ENCODE measurements at regions of chr5 and their contacts with region 1.

Region 1: GRCh38 chr5:159133041-159133741 is 33.5 kb upstream of the EBF1 start:
- DNase-seq: peak; percentile 15
- H3K4me3 ChIP-seq: no peak overlapping the region
- H3K27ac ChIP-seq: no peak overlapping the region
- H3K27me3 ChIP-seq: peaks cover 11% of the 10 kb centered on the region
- CTCF ChIP-seq: peak; percentile 80

Region 2: GRCh38 chr5:158174918-158175851 is 958.0 kb before region 1 on chr5:
- CTCF ChIA-PET with region 1: interaction called, 22 read pairs
- POLR2A ChIA-PET with region 1: no interaction called
- DNase-seq: peak; percentile 11
- H3K4me3 ChIP-seq: no peak overlapping the region
- H3K27ac ChIP-seq: no peak overlapping the region
- H3K27me3 ChIP-seq: peaks cover 2% of the 10 kb centered on the region
- CTCF ChIP-seq: peak; percentile 90